Heart right ventricle (tissue), 16 donors: ENCODE measurements at regions of chr6 and their contacts with region 1.

Region 1: GRCh38 chr6:14578994-14579393 is 461.4 kb downstream of the CD83 start:
- DNase-seq: no peak
- ATAC-seq: no peak
- H3K4me3 ChIP-seq: no peak overlapping the region
- H3K27ac ChIP-seq: no peak overlapping the region
- H3K4me1 ChIP-seq: peaks cover 0 to 8% (median 0%) of the 10 kb centered on the region in 9 donors
- H3K27me3 ChIP-seq: no peaks in the 10 kb centered on the region
- CTCF ChIP-seq: no peak

Region 2: DNA sequence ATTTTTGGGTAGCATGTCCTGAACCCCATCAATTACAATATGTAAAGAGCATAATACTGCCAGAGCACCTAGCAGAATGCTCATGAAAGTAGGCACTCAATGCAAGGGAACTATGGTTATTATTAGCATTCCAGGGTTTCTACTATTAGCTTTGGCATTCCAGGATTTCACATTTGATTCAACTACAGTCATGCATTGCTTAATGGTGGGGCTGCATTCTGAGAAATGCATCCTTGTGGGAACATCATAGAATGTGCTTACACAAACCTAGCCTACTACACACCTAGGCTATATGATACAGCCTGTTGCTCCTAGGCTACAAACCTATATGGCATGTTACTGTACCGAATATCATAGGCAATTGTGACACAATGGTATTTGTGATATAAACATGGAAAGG is 213.6 kb before region 1 on chr6:
- intact Hi-C with region 1: loop called in 1 of 10 experiments (anchors 5 kb)
- DNase-seq: no peak
- ATAC-seq: no peak
- H3K4me3 ChIP-seq: no peak overlapping the region
- H3K27ac ChIP-seq: no peak overlapping the region
- H3K4me1 ChIP-seq: peaks cover 0 to 46% (median 24%) of the 10 kb centered on the region in 9 donors
- H3K27me3 ChIP-seq: no peaks in the 10 kb centered on the region
- CTCF ChIP-seq: no peak